K562 (cell line): ENCODE measurements at regions of chr5 and their contacts with region 1.

Region 1: GRCh38 chr5:132777209-132778069 is at the start of gene SEPTIN8:
- DNase-seq: peak; percentile 73 to 87 (median 82)
- ATAC-seq: peak; percentile 43
- H3K4me3 ChIP-seq: peak within 1 kb of the TSS; percentile 58
- H3K27ac ChIP-seq: peak within 1 kb of the TSS; percentile 79
- H3K4me1 ChIP-seq: peaks cover 53 to 60% of the 10 kb centered on the region in 2 experiments
- H3K27me3 ChIP-seq: no peaks in the 10 kb centered on the region
- CTCF ChIP-seq: no peak
- EP300 ChIP-seq: no peak
- POLR2A ChIP-seq: 0 out of 2 replicates have a peak, but pooled peaks have one; percentile 31
- RAD21 ChIP-seq: no peak
- polyA plus RNA-seq, gene SEPTIN8: 19.3 to 21.0 TPM

Region 2: DNA sequence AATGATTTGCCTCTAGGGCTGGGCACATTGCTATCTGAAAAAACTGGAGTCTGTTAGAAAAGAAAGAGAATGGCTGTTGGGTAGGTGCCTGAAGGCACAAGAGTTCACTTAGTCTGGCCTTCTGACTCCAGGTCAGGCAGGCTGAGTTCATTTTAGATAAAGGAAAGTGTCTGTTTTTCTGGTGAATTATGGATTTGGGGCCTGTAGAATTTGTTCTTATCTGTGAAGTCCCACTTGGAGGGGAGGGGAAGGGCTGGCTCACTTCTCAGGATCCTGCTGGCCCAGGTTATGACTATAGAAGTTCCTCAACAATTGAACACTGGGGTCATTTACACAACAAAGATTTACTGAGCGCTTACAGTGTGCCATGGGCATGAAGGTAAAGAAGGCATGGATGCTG is 11.1 kb after region 1 on chr5:
- CTCF ChIA-PET with region 1: no interaction called
- POLR2A ChIA-PET with region 1: interaction called, 10 read pairs
- in situ Hi-C with region 1: no loop called
- intact Hi-C with region 1: no loop called
- DNase-seq: peak in 3 of 4 experiments; percentile 43 to 88 (median 78)
- ATAC-seq: peak; percentile 78
- H3K4me3 ChIP-seq: no peak overlapping the region
- H3K27ac ChIP-seq: peak overlapping the region; percentile 58
- H3K4me1 ChIP-seq: peaks cover 38 to 60% of the 10 kb centered on the region in 2 experiments
- H3K27me3 ChIP-seq: no peaks in the 10 kb centered on the region
- CTCF ChIP-seq: no peak
- EP300 ChIP-seq: peak; percentile 81
- POLR2A ChIP-seq: no peak
- RAD21 ChIP-seq: no peak

Region 3: DNA sequence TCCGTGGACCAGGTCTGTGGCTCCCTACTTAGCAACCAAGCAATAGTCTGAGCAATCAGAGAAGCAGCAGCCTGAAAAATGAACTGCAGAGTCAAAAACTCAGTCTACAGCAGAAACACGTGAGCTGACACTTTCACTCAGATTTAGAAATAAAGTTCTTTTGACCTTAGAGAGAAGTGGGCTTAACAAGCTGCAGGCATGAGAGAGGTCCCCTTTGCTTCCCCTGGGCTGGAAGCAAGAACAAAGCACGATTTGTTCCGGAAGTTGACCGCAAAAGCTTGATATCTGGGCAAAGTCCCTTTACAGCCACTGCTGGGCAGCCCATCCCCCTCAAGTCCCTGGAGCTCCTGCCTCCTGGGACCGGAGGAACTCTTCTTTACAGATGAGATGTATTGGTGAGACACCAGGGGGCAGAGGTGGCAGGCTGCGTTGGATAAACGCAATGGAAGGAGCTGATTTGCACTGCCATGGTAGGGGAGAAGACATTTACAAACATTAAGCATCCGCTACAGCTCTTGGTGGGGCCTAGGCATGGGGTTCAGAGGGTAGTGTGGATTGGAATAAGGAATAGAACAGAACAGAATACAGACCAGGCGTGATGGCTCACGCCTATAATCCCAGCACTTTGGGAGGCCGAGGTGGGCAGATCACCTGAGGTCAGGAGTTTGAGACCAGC is 29.9 kb after region 1 on chr5:
- CTCF ChIA-PET with region 1: no interaction called
- POLR2A ChIA-PET with region 1: interaction called, 7 read pairs
- in situ Hi-C with region 1: no loop called
- intact Hi-C with region 1: loop called (anchors 2 kb)
- DNase-seq: peak in 2 of 4 experiments; percentile 60 to 70
- ATAC-seq: peak; percentile 93
- H3K4me3 ChIP-seq: no peak overlapping the region
- H3K27ac ChIP-seq: no peak overlapping the region
- H3K4me1 ChIP-seq: peaks cover 7 to 10% of the 10 kb centered on the region in 2 experiments; a peak in 3 of 5 replicates
- H3K27me3 ChIP-seq: no peaks in the 10 kb centered on the region
- CTCF ChIP-seq: peak; percentile 41 to 61 (median 53); a peak in 5 of 6 replicates
- EP300 ChIP-seq: no peak
- POLR2A ChIP-seq: no peak
- RAD21 ChIP-seq: peak; percentile 35 to 48; a peak in 3 of 4 replicates

Region 4: DNA sequence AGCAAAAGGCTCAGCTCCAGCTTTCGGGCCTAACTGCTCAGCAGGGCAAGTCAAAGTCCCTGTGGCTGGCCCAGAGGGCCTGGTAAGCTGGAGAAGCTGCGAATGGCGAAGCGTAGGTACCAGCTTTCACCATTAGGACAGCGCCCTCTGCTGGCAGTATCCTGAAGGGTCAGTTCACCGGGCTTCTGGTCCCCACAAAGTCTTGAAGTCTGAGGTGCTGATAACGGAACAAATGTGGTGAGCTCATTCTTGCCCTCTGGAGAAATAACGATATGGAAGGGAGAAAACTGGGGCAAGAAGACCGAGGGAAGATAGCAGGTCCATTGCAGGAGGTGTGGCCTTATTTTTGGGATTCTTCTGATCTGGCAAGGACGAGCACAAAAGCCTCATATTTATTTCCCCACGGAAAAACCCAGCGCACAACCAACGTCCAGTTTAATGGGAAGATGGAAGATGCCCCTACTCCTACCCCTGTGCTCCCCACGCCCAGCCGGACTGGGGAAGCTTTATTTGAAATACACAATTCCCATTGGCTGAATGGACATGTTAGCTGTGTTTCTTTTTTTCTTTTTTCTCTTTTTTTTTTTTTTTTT is 42.8 kb after region 1 on chr5:
- CTCF ChIA-PET with region 1: no interaction called
- POLR2A ChIA-PET with region 1: interaction called, 4 read pairs
- in situ Hi-C with region 1: no loop called
- intact Hi-C with region 1: loop called (anchors 2 kb)
- DNase-seq: peak; percentile 84 to 97 (median 88)
- ATAC-seq: peak; percentile 96
- H3K4me3 ChIP-seq: no peak overlapping the region
- H3K27ac ChIP-seq: no peak overlapping the region
- H3K4me1 ChIP-seq: peaks cover 2 to 19% of the 10 kb centered on the region in 2 experiments; a peak in 3 of 5 replicates
- H3K27me3 ChIP-seq: no peaks in the 10 kb centered on the region
- CTCF ChIP-seq: peak; percentile 90 to 98 (median 96)
- EP300 ChIP-seq: peak; percentile 11; the same call in 1 of the 2 replicates
- POLR2A ChIP-seq: no peak
- RAD21 ChIP-seq: peak; percentile 98 to 99

Region 5: DNA sequence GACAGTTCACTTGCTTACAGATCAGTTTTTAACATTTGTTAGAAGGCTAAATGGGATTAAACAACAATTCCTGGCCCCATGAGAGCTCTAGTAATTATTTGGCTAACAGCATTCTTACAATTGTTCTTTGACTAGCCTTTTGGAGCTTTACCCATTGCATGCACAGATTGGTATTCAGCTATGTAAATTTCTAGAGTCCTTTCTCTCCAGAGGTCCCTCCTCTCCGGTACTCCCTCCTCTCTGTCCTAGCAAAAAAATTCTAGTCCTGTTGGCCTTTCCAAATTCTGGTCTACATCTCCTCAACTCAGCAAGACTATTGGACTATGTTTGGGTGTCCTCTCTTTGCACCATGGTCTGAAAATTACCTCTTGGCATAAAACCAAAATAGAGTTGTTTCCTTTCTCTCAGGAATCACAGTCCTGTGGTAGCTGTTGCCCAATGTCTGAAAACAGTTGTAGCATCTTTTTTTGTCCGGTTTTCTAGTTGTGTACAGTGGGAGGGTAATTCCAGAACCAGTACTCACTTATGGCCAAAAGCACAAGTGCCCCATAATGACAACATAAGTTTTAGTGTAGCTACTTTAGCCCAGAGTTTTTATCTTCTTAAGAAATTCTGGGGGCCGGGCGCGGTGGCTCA is 1837.1 kb after region 1 on chr5:
- CTCF ChIA-PET with region 1: no interaction called
- POLR2A ChIA-PET with region 1: no interaction called
- in situ Hi-C with region 1: loop called (anchors 10 kb)
- intact Hi-C with region 1: no loop called
- DNase-seq: no peak
- ATAC-seq: no peak
- H3K4me3 ChIP-seq: no peak overlapping the region
- H3K27ac ChIP-seq: no peak overlapping the region
- H3K4me1 ChIP-seq: no peaks in the 10 kb centered on the region
- H3K27me3 ChIP-seq: no peaks in the 10 kb centered on the region
- CTCF ChIP-seq: no peak
- EP300 ChIP-seq: no peak
- POLR2A ChIP-seq: no peak
- RAD21 ChIP-seq: no peak